ENCODE measurements at regions of chr4 and their contacts with region 1.

Region 1: GRCh38 chr4:153916273-153916755 is 127.4 kb upstream of the SFRP2 start:
- DNase-seq: no peak
- H3K4me3 Mint-ChIP-seq: no peak overlapping the region
- H3K27ac Mint-ChIP-seq: peak overlapping the region; percentile 17
- H3K4me1 Mint-ChIP-seq: peaks cover 17% of the 10 kb centered on the region
- H3K27me3 Mint-ChIP-seq: peaks cover 15% of the 10 kb centered on the region

Region 2: GRCh38 chr4:153809307-153809706 is 107.0 kb before region 1 on chr4:
- intact Hi-C with region 1: loop called (anchors 1 kb)
- DNase-seq: no peak
- H3K4me3 Mint-ChIP-seq: no peak overlapping the region
- H3K27ac Mint-ChIP-seq: no peak overlapping the region
- H3K4me1 Mint-ChIP-seq: peaks cover 11% of the 10 kb centered on the region
- H3K27me3 Mint-ChIP-seq: peaks cover 7% of the 10 kb centered on the region

Region 3: GRCh38 chr4:154164931-154165839 is 248.9 kb after region 1 on chr4:
- intact Hi-C with region 1: loop called (anchors 1 kb)
- DNase-seq: no peak
- H3K4me3 Mint-ChIP-seq: no peak overlapping the region
- H3K27ac Mint-ChIP-seq: no peak overlapping the region
- H3K4me1 Mint-ChIP-seq: peaks cover 6% of the 10 kb centered on the region
- H3K27me3 Mint-ChIP-seq: no peaks in the 10 kb centered on the region